ENCODE measurements at regions of chr15 and their contacts with region 1.

Region 1: GRCh38 chr15:97849183-97849582 is 111.3 kb upstream of the ARRDC4 start:
- DNase-seq: no peak
- H3K4me3 ChIP-seq: no peak overlapping the region
- H3K27ac ChIP-seq: no peak overlapping the region
- H3K27me3 ChIP-seq: peaks cover 0 to 3% (median 0%) of the 10 kb centered on the region in 45 donors
- CTCF ChIP-seq: no peak

Region 2: GRCh38 chr15:97783240-97783639 is 65.9 kb before region 1 on chr15:
- intact Hi-C with region 1: loop called in 1 of 2 experiments (anchors 10 kb)
- DNase-seq: no peak
- H3K4me3 ChIP-seq: no peak overlapping the region
- H3K27ac ChIP-seq: peak overlapping the region in 4 of 59 donors; percentile 15 to 56 (median 28)
- H3K27me3 ChIP-seq: peaks cover 0 to 3% (median 0%) of the 10 kb centered on the region in 45 donors
- CTCF ChIP-seq: no peak